ENCODE measurements at regions of chr2 and their contacts with region 1.

Region 1: GRCh38 chr2:70142590-70143313 is 48.1 kb downstream of the C2orf42 start:
- DNase-seq: peak; percentile 100
- H3K4me3 Mint-ChIP-seq: peak overlapping the region; percentile 87
- H3K27ac Mint-ChIP-seq: peak overlapping the region; percentile 98
- H3K4me1 Mint-ChIP-seq: peaks cover 59% of the 10 kb centered on the region
- H3K27me3 Mint-ChIP-seq: no peaks in the 10 kb centered on the region

Region 2: DNA sequence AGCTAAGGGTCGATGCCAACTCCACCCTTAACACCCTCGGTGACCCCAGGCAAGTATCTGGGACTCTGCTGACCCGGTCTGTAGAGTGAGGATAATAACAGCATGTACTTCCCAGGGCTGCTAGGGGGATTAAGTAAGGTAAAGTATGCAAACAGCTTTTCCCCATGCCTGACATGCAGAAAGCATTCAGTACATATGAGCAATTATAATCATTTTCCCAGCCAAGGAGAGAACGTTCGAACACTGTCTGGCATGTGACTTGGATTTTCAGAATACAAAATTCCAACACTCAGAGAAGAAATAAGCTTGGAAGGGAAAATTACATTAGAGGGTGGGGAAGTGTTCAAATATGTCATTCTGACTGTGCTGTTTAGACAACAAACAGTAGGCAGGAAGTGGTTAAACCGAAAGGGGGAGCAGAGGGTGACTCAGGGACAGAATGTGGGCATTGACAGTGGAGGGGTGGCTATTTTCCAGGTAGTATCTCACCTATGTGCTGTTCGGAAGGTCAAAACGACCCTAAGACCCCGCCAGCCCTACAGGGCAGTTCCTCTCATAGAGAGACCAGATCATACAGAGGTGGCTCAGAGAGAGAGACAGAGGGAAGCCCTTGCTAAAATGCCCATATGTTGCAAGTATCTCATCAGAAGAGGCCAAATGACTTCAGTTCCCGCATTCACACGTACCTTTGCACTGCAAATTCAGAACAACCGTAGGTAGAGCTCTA is 196.2 kb before region 1 on chr2:
- intact Hi-C with region 1: loop called (anchors 1 kb)
- DNase-seq: peak; percentile 92
- H3K4me3 Mint-ChIP-seq: peak overlapping the region; percentile 56
- H3K27ac Mint-ChIP-seq: peak overlapping the region; percentile 90
- H3K4me1 Mint-ChIP-seq: peaks cover 40% of the 10 kb centered on the region
- H3K27me3 Mint-ChIP-seq: no peaks in the 10 kb centered on the region

Region 3: GRCh38 chr2:70124983-70125480 is 17.7 kb before region 1 on chr2:
- intact Hi-C with region 1: loop called (anchors 1 kb)
- DNase-seq: peak; percentile 89
- H3K4me3 Mint-ChIP-seq: peak overlapping the region; percentile 94
- H3K27ac Mint-ChIP-seq: peak overlapping the region; percentile 100
- H3K4me1 Mint-ChIP-seq: peaks cover 63% of the 10 kb centered on the region
- H3K27me3 Mint-ChIP-seq: no peaks in the 10 kb centered on the region

Region 4: GRCh38 chr2:70190418-70191243 is 47.9 kb after region 1 on chr2 and contains the start of gene C2orf42:
- intact Hi-C with region 1: loop called (anchors 1 kb)
- DNase-seq: peak; percentile 98
- H3K4me3 Mint-ChIP-seq: peak within 1 kb of the TSS; percentile 92
- H3K27ac Mint-ChIP-seq: peak within 1 kb of the TSS; percentile 100
- H3K4me1 Mint-ChIP-seq: peaks cover 21% of the 10 kb centered on the region
- H3K27me3 Mint-ChIP-seq: peaks cover 2% of the 10 kb centered on the region
- total RNA-seq, gene C2orf42: 18.5 and 19.6 TPM in 2 replicates

Region 5: GRCh38 chr2:70412294-70413070 is 269.7 kb after region 1 on chr2:
- intact Hi-C with region 1: no loop called
- DNase-seq: no peak
- H3K4me3 Mint-ChIP-seq: no peak overlapping the region
- H3K27ac Mint-ChIP-seq: no peak overlapping the region
- H3K4me1 Mint-ChIP-seq: no peaks in the 10 kb centered on the region
- H3K27me3 Mint-ChIP-seq: peaks cover 32% of the 10 kb centered on the region

Measured in activated CD4-positive, alpha-beta T cell treated with anti-CD3 and anti-CD28 coated beads, Interleukin-2, amount 10 ng/mL, durations not matched to agents 24 days and 14 days (primary cell).